A673 (cell line): ENCODE measurements at regions of chr1 and their contacts with region 1.

Region 1: DNA sequence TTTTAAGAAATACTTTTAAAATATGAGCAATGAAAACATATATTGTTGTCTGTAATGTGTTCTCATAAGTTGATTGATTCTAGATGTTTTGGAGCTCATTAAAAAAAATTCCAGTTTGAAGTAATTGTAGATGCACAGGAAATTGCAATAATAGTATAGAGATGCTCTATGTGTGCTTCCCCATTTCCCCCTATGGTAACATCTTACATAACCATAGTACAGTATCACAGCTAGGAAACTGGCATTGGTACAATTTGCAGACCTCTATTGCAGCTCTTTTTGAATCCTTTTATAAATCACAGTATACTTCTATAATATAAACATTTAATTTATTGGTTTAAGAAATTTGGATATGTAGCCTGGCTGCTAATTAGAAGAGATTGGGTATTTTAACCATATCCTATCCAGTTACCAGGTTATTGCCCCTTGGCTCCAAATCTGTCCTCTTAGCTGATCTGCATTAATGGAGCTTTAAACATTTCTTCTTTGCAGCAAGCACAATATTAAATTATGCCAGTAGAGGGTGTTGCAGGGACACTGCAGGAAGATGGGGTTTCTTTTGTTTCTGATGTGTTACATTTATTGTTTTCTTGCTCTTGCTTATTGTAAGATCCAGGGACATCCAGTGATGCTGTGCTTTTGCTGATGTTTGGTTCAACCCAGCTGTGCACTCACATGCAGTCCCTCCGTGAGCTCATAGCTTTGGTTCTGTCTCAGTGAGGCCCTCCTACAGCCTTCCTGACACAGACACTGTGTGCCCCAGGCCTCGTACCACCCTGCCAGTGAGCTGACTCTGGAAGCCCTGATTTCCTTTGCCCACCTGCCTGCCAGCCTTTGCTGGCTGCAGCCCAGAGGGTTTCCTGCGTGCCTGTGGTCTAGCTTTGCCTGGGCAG is 103.3 kb downstream of the RABGAP1L start:
- DNase-seq: peak; percentile 79
- H3K4me3 ChIP-seq: no peak overlapping the region
- H3K27ac ChIP-seq: no peak overlapping the region
- H3K4me1 ChIP-seq: peaks cover 40% of the 10 kb centered on the region
- H3K27me3 ChIP-seq: no peaks in the 10 kb centered on the region
- CTCF ChIP-seq: peak; percentile 90

Region 2: GRCh38 chr1:174726167-174726879 is 463.7 kb after region 1 on chr1:
- CTCF ChIA-PET with region 1: interaction called, 41 read pairs
- POLR2A ChIA-PET with region 1: no interaction called
- intact Hi-C with region 1: loop called (anchors 1 kb)
- DNase-seq: peak; percentile 53
- H3K4me3 ChIP-seq: no peak overlapping the region
- H3K27ac ChIP-seq: no peak overlapping the region
- H3K4me1 ChIP-seq: no peaks in the 10 kb centered on the region
- H3K27me3 ChIP-seq: no peaks in the 10 kb centered on the region
- CTCF ChIP-seq: peak; percentile 68

Region 3: GRCh38 chr1:174743654-174744561 is 481.3 kb after region 1 on chr1:
- CTCF ChIA-PET with region 1: interaction called, 9 read pairs
- POLR2A ChIA-PET with region 1: no interaction called
- intact Hi-C with region 1: loop called (anchors 1 kb)
- DNase-seq: peak; percentile 60
- H3K4me3 ChIP-seq: no peak overlapping the region
- H3K27ac ChIP-seq: no peak overlapping the region
- H3K4me1 ChIP-seq: no peaks in the 10 kb centered on the region
- H3K27me3 ChIP-seq: no peaks in the 10 kb centered on the region
- CTCF ChIP-seq: peak; percentile 74

Region 4: DNA sequence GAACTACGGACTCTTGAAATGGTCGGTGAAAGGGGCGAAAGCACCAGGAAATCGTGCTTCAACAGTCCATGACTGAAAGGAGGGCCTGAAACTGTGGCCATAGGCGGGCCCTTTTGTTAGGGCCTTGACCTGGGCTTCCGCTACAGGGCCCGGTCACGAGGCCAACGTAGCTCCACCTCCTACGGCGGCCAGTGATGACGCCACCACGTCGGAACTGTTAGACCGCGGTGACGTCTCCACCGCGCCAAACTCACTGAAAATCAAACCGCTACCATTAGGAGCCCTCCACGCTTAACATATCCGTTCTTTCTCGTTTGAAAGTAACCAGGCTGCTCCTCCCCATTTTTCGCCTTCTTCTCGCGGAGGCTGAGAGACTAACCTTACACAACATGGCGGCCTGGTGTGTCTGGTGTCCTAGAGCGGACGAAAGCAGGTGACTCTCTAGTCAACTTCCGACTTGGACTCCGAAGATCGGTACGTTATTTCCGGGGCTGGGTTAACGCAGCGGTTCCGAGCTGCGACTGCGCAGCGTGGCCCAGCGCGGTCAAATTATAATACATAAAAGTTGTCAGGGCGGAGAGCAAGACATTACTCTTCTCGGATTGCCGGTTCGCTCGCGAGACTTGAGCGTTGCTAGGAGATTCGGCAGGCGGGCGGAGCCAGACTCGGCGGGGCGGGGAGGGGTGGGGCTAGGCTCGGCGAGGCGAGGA is 736.8 kb after region 1 on chr1:
- CTCF ChIA-PET with region 1: interaction called, 4 read pairs
- POLR2A ChIA-PET with region 1: no interaction called
- intact Hi-C with region 1: loop called (anchors 5 kb)
- DNase-seq: peak; percentile 99
- H3K4me3 ChIP-seq: peak overlapping the region; percentile 92
- H3K27ac ChIP-seq: peak overlapping the region; percentile 100
- H3K4me1 ChIP-seq: peaks cover 10% of the 10 kb centered on the region
- H3K27me3 ChIP-seq: no peaks in the 10 kb centered on the region
- CTCF ChIP-seq: no peak